ENCODE measurements at regions of chr14 and their contacts with region 1.

Region 1: DNA sequence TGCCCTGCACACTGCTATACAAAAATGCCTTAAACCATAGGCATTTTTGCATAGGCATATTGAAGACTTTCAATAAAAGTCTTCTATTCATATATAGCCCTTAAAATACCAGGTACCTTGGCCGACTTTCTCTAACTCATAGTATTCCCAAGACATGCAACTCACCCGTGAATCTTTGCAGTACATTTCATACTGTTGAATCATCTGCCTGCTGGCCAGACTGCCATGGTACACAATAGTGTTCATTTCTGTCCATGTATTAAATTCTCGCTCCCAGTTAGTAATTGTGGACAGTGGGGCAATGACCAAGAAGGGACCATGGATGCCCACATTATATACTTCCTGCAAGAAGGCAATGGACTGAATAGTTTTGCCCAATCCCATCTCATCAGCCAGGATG is 24.3 kb upstream of the SUPT16H start:
- DNase-seq: no peak
- ATAC-seq: no peak
- H3K4me3 ChIP-seq: no peak overlapping the region
- H3K27ac ChIP-seq: no peak overlapping the region
- H3K4me1 ChIP-seq: no peaks in the 10 kb centered on the region
- H3K27me3 ChIP-seq: no peaks in the 10 kb centered on the region

Region 2: DNA sequence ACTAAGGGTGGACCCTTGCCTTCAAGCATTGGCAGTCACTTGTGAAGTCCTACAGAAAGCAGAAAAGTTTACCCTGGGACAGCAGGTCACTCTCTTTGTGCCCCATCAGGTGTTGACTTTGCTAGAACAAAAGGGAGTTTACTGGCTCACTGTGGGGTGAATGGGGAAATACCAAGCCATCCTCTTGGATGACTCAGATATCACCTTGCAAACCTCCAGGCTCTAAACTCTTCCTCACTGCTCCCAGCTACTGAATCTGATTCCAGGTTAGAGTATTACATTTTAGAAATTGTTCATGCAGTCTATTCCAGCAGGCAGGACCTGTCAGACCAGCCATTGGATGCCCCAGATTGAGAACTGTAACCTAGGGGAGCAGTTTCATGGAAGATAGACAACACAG is 647.2 kb before region 1 on chr14:
- intact Hi-C with region 1: no loop called
- DNase-seq: no peak
- ATAC-seq: no peak
- H3K4me3 ChIP-seq: no peak overlapping the region
- H3K27ac ChIP-seq: no peak overlapping the region
- H3K4me1 ChIP-seq: no peaks in the 10 kb centered on the region
- H3K27me3 ChIP-seq: no peaks in the 10 kb centered on the region

Region 3: DNA sequence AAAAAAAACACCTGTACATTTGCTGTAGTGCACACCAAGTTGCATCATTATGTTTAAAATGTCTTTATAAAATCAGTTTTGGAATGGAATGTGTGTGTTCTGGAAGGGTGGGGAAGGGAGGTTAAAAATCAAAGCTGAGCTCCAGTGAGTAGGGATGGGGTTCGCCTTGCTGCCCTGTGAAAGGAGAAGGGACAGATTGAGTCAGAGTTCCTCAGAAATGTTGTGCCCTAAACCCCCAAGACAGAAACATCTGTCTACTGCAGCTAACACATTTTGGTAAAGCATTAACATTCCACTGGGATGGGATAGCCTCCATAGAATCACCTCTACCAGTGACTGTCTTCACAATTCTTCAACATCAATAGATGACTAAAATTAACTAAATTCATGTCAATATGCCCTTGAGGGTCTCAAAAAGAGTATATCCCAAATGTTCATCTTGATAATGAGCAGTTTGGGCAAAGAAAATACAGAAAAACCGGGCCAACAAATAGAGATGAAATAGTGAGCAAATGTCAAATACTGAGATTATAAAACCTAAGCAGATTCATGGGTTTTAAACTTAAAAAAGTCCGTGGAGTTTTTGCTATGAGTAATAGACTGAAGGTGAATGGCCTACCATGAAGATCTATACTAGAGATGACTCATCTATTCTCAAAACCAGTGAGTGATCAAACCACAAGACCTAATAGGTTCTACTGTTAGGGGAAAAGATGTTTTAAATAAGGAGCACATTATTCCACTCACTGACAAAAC is 144.3 kb before region 1 on chr14:
- intact Hi-C with region 1: no loop called
- DNase-seq: no peak
- ATAC-seq: no peak
- H3K4me3 ChIP-seq: no peak overlapping the region
- H3K27ac ChIP-seq: peak overlapping the region; percentile 46
- H3K4me1 ChIP-seq: peaks cover 6% of the 10 kb centered on the region
- H3K27me3 ChIP-seq: no peaks in the 10 kb centered on the region

Region 4: DNA sequence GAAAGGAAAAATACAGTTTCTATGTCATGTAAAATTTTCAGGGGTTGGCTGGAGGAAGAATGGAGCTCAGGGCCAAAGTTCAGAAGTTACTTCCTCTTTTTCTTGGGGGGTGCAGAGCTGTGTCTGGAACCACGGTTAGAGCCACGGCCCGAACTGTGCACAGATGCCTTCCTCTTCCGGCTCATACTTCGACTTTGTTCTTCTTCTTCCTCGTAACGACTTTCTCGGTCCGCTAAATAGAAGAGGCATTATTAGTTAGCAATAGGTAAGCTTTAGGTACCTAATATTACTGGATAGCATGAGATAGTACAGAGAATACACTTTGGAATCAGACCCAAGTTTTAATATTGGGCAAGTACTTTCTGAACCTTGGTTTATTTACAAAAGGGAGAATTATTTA is 55.6 kb before region 1 on chr14:
- intact Hi-C with region 1: loop called in 1 of 4 experiments (anchors 10 kb)
- DNase-seq: peak in 2 of 3 donors; percentile 20 to 47
- ATAC-seq: peak; percentile 32 to 61
- H3K4me3 ChIP-seq: no peak overlapping the region
- H3K27ac ChIP-seq: no peak overlapping the region
- H3K4me1 ChIP-seq: no peaks in the 10 kb centered on the region
- H3K27me3 ChIP-seq: no peaks in the 10 kb centered on the region

Region 5: DNA sequence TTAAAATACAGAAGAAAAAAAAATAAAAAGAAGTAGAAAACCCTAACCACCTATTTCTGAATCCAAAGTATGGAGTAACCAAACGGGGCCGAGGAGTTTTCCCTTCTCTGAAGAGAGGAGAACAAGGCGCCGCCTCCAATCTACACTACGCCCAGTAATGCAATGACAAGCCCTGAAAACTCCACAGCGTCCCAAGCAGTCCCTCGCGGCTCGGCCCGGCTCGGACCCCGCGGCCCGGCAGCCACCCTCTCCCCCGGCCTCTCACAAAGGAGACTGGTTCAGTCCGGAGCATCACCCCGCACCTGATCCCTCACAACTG is 47.4 kb after region 1 on chr14:
- intact Hi-C with region 1: no loop called
- DNase-seq: no peak
- ATAC-seq: peak; percentile 32 to 48
- H3K4me3 ChIP-seq: peak overlapping the region; percentile 85
- H3K27ac ChIP-seq: peak overlapping the region; percentile 77
- H3K4me1 ChIP-seq: peaks cover 7% of the 10 kb centered on the region
- H3K27me3 ChIP-seq: no peaks in the 10 kb centered on the region

Measured in right cardiac atrium (tissue), 5 donors.